ENCODE measurements at regions of chr2 and their contacts with region 1.

Region 1: DNA sequence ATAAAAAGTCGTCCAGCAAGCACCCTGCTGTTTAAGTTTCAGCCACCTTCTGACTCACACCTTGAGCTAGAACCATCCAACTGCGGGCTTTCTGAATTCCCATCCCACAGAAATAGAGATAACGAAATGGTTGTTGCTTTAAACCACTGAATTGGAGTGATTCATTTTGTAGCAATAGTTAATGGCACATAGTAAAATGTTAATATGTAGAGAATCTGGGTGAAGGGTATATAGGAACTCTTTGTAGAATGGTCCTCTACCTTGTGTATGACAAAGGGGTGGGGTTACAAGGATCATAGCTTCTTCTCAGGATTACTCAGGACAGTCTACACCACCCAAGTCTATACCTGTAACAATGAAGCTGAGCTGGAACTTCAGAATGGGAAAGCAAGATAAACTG is 2.4 kb upstream of the MAPRE3 start:
- DNase-seq: no peak
- ATAC-seq: no peak

Region 2: GRCh38 chr2:26577434-26578112 is 390.4 kb before region 1 on chr2:
- intact Hi-C with region 1: no loop called
- DNase-seq: peak; percentile 74
- ATAC-seq: peak; percentile 84

Region 3: GRCh38 chr2:27016801-27017325 is 48.9 kb after region 1 on chr2:
- intact Hi-C with region 1: loop called (anchors 5 kb)
- DNase-seq: peak; percentile 62
- ATAC-seq: peak; percentile 48

Region 4: GRCh38 chr2:27086090-27086723 is 118.2 kb after region 1 on chr2:
- intact Hi-C with region 1: loop called (anchors 10 kb)
- DNase-seq: peak; percentile 98
- ATAC-seq: peak; percentile 91

Region 5: DNA sequence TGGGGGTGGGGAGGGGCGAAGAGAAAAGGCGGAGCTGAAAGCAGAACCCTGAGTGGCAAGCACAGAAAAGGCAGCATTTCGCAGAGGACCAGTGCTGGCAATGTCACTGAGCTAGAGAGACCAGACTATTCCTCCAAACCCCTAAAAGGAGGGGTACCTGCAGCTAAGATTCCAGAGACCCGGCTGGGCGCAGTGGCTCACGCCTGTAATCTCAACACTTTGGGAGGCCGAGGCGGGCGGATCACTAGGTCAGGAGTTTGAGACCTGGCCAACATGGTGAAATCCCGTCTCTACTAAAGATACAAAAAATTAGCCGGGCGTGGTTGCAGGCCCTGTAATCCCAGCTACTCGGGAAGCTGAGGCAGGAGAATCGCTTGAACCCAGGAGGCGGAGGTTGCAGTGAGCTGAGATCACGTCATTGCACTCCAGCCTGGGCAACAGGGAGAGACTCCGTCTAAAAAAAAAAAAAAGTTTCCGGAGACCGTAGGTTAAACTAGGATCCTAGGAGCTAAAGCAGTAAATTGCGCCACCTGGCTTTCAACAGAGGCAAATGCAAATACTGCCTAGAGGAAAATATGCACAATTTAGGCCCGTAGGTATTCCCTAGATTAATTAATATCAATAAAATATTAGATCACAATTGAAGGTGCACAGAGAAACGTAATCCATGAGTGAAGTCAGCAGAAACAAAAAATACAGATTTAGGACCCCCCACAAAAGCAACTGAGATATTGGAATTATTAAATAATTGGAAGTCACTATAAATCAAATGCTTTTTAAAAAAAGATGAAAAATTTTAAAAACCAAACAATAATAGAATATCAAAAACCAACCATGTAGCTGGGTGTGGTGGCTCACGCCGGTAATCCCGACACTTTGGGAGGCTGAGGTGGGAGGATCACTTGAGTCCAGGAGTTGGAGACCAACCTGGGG is 335.4 kb after region 1 on chr2:
- intact Hi-C with region 1: no loop called
- DNase-seq: no peak
- ATAC-seq: peak; percentile 67

Region 6: DNA sequence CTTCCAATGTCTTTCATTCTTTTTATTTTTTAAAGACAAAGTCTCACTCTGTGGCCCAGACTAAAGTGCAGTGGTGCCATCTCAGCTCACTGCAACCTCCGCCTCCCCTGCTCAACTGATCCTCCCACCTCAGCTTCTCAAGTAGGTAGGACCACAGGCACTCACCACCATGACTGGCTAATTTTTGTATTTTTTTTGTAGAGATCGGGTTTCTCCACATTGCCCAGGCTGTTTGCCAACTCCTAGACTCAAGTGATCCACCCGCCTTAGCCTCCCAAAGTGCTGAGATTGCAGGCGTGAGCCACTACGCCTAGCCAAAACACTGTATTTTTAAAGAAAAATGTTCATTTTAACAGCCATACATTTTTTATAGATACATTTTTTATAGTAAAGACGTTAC is 541.3 kb after region 1 on chr2:
- intact Hi-C with region 1: no loop called
- DNase-seq: no peak
- ATAC-seq: no peak